AG04449 (cell line): ENCODE measurements at regions of chr19 and their contacts with region 1.

Region 1: DNA sequence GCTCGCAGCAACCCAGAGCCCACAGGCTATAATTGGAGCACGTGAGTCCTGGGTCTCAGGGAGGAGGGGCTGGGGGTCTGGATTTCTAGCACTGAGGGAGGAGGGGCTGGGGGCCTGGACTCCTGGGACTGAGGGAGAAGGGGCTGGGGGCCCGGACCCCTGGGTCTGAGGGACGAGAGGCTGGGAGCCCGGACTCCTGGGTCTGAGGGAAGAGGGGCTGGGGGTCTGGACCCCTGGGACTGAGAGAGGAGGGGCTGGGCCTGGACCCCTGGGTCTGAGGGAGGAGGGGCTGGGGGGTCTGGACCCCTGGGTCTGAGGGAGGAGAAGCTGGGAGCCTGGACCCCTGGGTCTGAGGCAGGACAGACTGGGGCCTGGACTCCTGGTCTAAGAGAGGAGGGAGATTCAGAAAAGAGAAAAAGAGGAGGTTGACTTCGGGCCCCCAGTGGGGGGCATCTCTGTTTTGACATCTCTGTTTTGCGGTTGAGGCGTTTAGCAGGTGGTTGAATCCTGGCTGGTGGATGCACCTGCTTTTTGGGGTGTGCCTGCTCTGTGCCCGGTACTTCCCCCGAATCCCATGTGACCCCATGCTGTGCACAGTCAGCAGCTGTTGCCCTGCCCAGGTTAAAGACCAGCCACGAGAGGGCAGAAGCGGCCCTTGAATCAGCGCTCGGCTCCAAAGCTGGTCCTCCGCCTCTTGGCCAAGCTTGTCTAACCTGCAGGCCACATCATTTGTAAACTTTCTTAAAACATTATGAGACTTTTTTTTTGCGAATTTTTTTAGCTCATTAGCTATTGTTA is 10.5 kb downstream of the PVR start:
- DNase-seq: no peak
- H3K4me3 ChIP-seq: no peak overlapping the region
- CTCF ChIP-seq: peak; percentile 62

Region 2: GRCh38 chr19:44576843-44577565 is 77.2 kb before region 1 on chr19:
- CTCF ChIA-PET with region 1: interaction called, 121 read pairs
- POLR2A ChIA-PET with region 1: interaction called, 3 read pairs
- DNase-seq: no peak
- H3K4me3 ChIP-seq: no peak overlapping the region
- CTCF ChIP-seq: peak; percentile 68

Region 3: GRCh38 chr19:44587963-44588770 is 66.0 kb before region 1 on chr19:
- CTCF ChIA-PET with region 1: interaction called, 53 read pairs
- POLR2A ChIA-PET with region 1: interaction called, 4 read pairs
- DNase-seq: peak; percentile 89
- H3K4me3 ChIP-seq: no peak overlapping the region
- CTCF ChIP-seq: peak; percentile 38

Region 4: GRCh38 chr19:44635581-44636438 is 18.4 kb before region 1 on chr19:
- CTCF ChIA-PET with region 1: interaction called, 21 read pairs
- POLR2A ChIA-PET with region 1: interaction called, 3 read pairs
- DNase-seq: no peak
- H3K4me3 ChIP-seq: no peak overlapping the region
- CTCF ChIP-seq: no peak

Region 5: GRCh38 chr19:44643605-44644401 is 10.4 kb before region 1 on chr19 and contains the start of gene PVR:
- CTCF ChIA-PET with region 1: interaction called, 30 read pairs
- POLR2A ChIA-PET with region 1: interaction called, 4 read pairs
- DNase-seq: no peak
- H3K4me3 ChIP-seq: peak within 1 kb of the TSS; percentile 90
- CTCF ChIP-seq: no peak